SK-N-SH (cell line): ENCODE measurements at regions of chr9 and their contacts with region 1.

Region 1: GRCh38 chr9:135221951-135222631 is 134.6 kb downstream of the OLFM1 start:
- DNase-seq: peak; percentile 68
- H3K4me3 ChIP-seq: no peak overlapping the region
- H3K27ac ChIP-seq: no peak overlapping the region
- H3K4me1 ChIP-seq: peaks cover 0 to 46% of the 10 kb centered on the region in 2 experiments; a peak in 2 of 4 replicates
- H3K27me3 ChIP-seq: no peaks in the 10 kb centered on the region
- CTCF ChIP-seq: no peak
- EP300 ChIP-seq: no peak
- RAD21 ChIP-seq: no peak

Region 2: GRCh38 chr9:135174248-135174647 is 47.8 kb before region 1 on chr9:
- CTCF ChIA-PET with region 1: no interaction called
- POLR2A ChIA-PET with region 1: no interaction called
- DNase-seq: no peak
- H3K4me3 ChIP-seq: no peak overlapping the region
- H3K27ac ChIP-seq: no peak overlapping the region
- H3K4me1 ChIP-seq: no peaks in the 10 kb centered on the region; a peak in 1 of 4 replicates
- H3K27me3 ChIP-seq: no peaks in the 10 kb centered on the region
- CTCF ChIP-seq: no peak
- EP300 ChIP-seq: no peak
- RAD21 ChIP-seq: no peak

Region 3: GRCh38 chr9:135343837-135344522 is 121.9 kb after region 1 on chr9:
- CTCF ChIA-PET with region 1: interaction called, 11 read pairs
- POLR2A ChIA-PET with region 1: no interaction called
- DNase-seq: peak; percentile 93
- H3K4me3 ChIP-seq: peak overlapping the region in 1 of 2 experiments; percentile 53; a peak in 1 of 4 replicates
- H3K27ac ChIP-seq: no peak overlapping the region
- H3K4me1 ChIP-seq: peaks cover 0 to 15% of the 10 kb centered on the region in 2 experiments; a peak in 2 of 4 replicates
- H3K27me3 ChIP-seq: no peaks in the 10 kb centered on the region
- CTCF ChIP-seq: peak; percentile 32
- EP300 ChIP-seq: no peak
- RAD21 ChIP-seq: peak; percentile 90

Region 4: DNA sequence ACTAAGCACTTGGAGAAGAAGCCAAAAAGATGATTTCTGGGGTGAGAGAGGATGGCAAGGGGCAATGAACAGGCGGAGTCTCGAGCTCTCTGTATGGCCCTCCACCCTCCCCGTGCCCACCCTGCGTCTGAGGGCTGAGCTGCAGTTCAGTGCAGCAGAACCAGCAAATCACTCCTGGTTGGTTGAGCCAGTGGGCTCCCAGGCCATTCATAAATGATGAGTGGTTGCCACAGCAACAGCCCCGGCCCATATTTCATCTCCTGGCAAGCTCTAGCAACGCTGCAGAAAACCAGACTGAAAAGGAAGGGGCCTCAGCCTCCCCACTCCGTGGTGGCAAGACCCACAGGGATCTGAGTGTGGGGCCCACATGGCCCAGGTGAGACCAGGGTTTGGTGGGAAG is 163.7 kb after region 1 on chr9:
- CTCF ChIA-PET with region 1: no interaction called
- POLR2A ChIA-PET with region 1: no interaction called
- DNase-seq: no peak
- H3K4me3 ChIP-seq: no peak overlapping the region
- H3K27ac ChIP-seq: no peak overlapping the region
- H3K4me1 ChIP-seq: no peaks in the 10 kb centered on the region
- H3K27me3 ChIP-seq: no peaks in the 10 kb centered on the region
- CTCF ChIP-seq: no peak
- EP300 ChIP-seq: no peak
- RAD21 ChIP-seq: no peak